ENCODE measurements at regions of chr6 and their contacts with region 1.

Region 1: DNA sequence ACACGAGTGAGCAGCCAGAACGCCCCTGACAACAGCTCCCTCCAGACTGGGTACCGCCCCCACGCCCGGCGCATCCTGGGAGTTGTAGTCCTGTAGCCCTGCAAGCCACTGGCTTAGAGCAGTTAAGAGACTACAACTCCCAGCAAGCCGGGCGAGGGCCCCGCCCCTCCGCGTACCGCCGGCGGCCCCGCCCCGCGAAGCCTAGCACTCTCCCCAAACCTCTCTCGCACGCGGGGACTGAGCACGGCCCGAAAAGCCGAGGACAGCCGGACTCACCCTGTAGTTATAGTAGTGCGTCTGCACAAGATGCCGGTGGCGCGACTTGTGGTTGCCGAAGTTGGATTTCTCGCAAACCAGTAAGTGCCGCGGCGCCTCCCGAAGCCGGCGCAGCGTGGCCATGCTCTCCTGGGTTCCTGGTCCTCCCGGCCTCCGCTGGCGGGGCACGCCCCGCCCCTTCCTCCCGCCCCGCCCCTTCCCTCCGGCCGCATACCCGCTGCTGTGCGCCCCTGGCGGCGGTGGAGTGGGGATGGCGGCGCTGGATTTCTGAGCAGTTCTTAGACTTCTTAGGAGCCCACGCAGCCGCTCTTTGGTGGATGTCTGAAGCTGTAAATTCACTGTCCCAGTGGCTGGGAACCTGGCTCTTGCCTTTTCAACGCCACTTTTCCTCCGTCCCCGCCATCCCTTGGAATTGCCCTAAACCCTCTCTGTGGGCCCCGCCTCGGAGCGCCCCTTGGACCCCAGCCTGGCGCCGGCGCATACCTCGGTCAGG is at the start of gene RPP40:
- DNase-seq: peak; percentile 93 to 99
- H3K4me3 ChIP-seq: peak within 1 kb of the TSS; percentile 56 to 71
- H3K27ac ChIP-seq: peak within 1 kb of the TSS; percentile 92 to 95
- H3K4me1 ChIP-seq: no peaks in the 10 kb centered on the region
- H3K27me3 ChIP-seq: no peaks in the 10 kb centered on the region
- CTCF ChIP-seq: peak; percentile 72 to 93 (median 93)
- total RNA-seq, gene RPP40: not detected

Region 2: GRCh38 chr6:4358414-4359114 is 645.2 kb before region 1 on chr6:
- intact Hi-C with region 1: loop called (anchors 10 kb)
- DNase-seq: peak; percentile 94 to 99
- H3K4me3 ChIP-seq: peak overlapping the region; percentile 35 to 39
- H3K27ac ChIP-seq: peak overlapping the region; percentile 96 to 98
- H3K4me1 ChIP-seq: peaks cover 5 to 10% of the 10 kb centered on the region in 2 donors
- H3K27me3 ChIP-seq: no peaks in the 10 kb centered on the region
- CTCF ChIP-seq: no peak

Region 3: DNA sequence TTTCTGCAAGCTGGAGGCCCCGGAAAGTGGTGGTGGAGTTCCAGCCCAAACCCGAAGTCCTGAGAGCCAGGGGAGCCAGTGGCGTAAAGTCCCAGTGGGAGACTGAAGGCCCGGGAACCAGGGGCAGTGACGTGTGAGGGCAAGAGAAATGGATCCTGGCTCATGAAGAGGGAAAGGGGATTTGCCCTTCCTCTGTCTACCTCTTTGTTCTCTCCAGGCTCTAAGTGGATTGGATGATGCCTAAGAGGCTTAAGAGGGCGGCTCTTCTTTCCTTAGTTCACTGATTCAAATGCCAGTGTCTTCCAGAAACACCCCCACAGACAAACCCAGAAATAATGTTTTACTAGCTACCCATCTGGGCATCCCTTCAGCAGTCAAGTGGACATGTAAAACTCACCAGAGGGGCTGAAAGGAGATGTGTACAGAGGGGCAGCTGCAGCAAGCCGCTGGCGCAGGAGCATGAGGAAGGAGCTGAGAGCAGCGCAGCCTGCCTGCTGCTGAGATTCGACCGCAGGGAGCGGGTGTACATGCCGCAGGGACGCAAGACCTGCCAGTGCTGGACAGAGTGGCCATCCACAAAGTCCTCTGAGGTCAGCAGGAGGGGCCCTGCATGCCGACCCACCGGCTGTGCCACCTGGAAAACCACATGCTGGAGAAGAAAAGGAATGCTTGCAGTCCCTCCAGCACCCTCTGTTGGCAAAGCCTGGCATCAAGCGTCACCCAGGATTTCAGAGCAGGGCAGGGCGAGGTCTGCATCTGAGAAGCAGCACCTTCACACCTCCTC is 198.0 kb before region 1 on chr6:
- intact Hi-C with region 1: no loop called
- DNase-seq: no peak
- H3K4me3 ChIP-seq: no peak overlapping the region
- H3K27ac ChIP-seq: no peak overlapping the region
- H3K4me1 ChIP-seq: peaks cover 0 to 4% of the 10 kb centered on the region in 2 donors
- H3K27me3 ChIP-seq: no peaks in the 10 kb centered on the region
- CTCF ChIP-seq: peak; percentile 20 to 57 (median 39)

Region 4: DNA sequence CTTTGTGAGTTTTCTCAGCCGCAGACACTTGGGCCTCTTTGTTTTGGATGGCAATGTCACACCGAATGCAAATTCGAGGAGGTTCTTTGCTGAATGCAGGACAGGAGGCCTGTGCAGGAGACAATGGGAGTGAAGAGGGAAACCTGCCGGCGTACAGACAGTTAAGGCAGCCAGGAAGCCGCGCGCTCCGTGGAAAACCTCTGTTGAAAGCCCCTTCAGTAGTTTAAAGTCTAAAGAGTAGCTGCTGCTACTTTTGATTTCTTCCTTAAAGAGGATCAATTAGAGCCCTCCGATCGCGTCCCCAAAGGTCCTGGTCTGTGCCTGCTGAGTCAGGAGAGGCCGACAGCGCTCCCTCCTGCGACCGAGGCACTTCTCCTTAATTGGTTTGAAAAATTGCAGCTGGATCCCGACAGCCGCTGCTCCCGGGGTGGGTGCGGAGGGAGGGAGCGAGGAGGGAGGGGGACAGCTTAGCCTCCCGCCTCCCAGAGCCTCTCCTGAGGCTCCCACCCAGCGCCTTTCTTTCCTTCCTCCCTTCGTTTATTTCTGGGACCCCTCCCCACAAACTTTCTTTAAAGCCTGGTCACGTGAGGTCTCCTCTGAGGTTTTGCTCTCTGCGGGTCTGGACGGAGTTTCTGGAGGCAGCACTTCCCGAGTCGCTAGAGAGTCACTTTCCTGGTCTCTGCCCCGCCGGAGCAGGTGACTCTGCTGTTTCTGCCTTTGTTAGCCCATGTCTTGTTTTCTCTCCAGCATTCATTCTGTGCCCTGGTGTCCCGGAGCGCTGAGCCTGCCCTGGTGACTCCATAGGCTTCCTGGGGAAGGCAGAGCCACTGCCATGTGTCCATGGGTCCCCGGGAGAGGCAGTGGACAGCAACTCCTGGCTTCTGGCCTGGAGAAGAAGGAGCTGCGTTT is 22.4 kb after region 1 on chr6:
- intact Hi-C with region 1: loop called (anchors 2 kb)
- DNase-seq: peak in 1 of 2 donors; percentile 70
- H3K4me3 ChIP-seq: peak overlapping the region; percentile 66
- H3K27ac ChIP-seq: peak overlapping the region; percentile 72 to 84
- H3K4me1 ChIP-seq: peaks cover 0 to 4% of the 10 kb centered on the region in 2 donors
- H3K27me3 ChIP-seq: no peaks in the 10 kb centered on the region
- CTCF ChIP-seq: peak in 1 of 3 experiments; percentile 27

Region 5: DNA sequence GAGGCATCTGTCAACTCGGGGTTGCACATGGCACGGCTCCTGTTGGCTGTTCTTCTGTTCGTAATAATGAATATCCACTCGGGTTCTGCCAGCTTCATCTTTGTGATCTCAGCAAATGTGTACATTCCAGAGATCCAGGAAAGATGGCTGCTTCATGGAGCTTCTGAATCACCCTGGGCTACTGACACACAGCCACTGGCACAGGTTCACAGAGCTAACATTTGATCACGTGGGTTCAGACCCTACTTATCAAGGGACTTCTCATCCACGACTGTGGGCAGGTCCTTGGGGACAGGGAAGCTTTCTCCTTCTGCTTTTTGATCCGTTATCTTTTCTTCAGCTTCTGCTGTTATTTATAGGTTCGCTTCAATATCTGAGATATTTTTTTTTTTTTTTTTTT is 99.5 kb after region 1 on chr6:
- intact Hi-C with region 1: no loop called
- DNase-seq: no peak
- H3K4me3 ChIP-seq: no peak overlapping the region
- H3K27ac ChIP-seq: no peak overlapping the region
- H3K4me1 ChIP-seq: no peaks in the 10 kb centered on the region
- H3K27me3 ChIP-seq: no peaks in the 10 kb centered on the region
- CTCF ChIP-seq: no peak

Region 6: DNA sequence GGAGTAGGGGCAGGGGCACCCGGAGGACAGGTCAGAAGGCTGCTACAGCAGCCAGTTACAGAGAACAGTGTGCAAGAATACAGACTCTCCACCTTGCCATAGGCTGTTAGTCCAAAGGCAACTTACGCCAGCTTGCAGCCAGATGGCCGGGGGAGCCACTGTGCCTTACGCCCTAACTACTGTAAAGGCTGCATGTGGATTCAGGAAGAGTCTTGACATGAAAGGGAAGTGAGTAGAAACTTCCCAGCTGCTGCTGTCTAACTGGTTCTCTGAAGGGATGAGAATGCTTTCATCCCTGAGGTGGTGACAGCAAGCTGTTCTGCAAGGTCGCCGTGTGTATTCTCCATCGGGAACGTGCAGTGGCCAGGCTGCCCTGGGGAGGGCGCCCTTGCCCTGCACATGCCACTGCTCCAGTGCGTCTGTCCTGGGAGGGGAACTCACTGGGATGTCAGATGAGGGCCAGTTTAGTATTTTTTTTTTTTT is 210.8 kb after region 1 on chr6:
- intact Hi-C with region 1: loop called (anchors 10 kb)
- DNase-seq: peak in 1 of 2 donors; percentile 71
- H3K4me3 ChIP-seq: peak overlapping the region in 1 of 2 donors; percentile 36
- H3K27ac ChIP-seq: peak overlapping the region; percentile 3 to 56
- H3K4me1 ChIP-seq: peaks cover 6 to 17% of the 10 kb centered on the region in 2 donors
- H3K27me3 ChIP-seq: no peaks in the 10 kb centered on the region
- CTCF ChIP-seq: peak; percentile 57 to 87 (median 71)

Region 7: DNA sequence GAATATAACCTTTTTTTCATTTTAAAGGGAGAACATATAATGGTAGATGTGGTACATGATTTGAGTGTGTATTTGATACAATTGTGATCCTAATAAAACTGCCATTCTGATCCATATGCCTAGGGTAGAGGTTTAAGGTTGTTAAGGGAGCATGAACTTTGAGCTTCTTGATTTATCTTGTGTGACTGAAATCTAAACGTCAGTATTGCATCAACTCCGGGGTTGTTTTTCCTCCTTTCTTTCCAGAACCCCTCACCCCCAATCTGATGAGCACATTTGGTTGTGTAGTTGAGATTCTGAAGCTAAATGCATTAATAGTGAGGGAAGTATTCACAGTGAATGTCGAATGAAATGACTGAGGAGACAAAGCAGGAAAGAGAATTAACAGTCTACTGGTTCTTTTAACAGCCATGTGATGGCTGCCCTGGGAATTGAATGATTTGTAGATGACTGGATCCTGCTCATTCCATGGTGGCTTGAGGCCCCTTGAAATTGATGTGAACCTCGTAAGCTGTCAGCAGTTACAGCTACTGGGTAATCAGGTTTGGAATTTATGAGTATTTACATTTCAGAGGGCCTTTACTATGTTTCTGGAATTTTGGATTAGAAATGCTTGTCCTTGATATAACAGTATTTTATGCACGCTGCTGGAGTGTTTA is 302.3 kb after region 1 on chr6:
- intact Hi-C with region 1: no loop called
- DNase-seq: no peak
- H3K4me3 ChIP-seq: no peak overlapping the region
- H3K27ac ChIP-seq: no peak overlapping the region
- H3K4me1 ChIP-seq: no peaks in the 10 kb centered on the region
- H3K27me3 ChIP-seq: no peaks in the 10 kb centered on the region
- CTCF ChIP-seq: no peak

Region 8: GRCh38 chr6:5670811-5671561 is 667.2 kb after region 1 on chr6:
- intact Hi-C with region 1: loop called (anchors 10 kb)
- DNase-seq: no peak
- H3K4me3 ChIP-seq: no peak overlapping the region
- H3K27ac ChIP-seq: peak overlapping the region; percentile 74 to 80
- H3K4me1 ChIP-seq: peaks cover 12 to 15% of the 10 kb centered on the region in 2 donors
- H3K27me3 ChIP-seq: no peaks in the 10 kb centered on the region
- CTCF ChIP-seq: no peak

Measured in ascending aorta (tissue), 2 donors.